Sciatic nerve (tissue), 2 donors: ENCODE measurements at regions of chr7 and their contacts with region 1.

Region 1: GRCh38 chr7:129169171-129169671 is 19.2 kb upstream of the SMO start:
- DNase-seq: peak; percentile 79
- ATAC-seq: peak; percentile 94

Region 2: GRCh38 chr7:129208667-129209066 is 39.4 kb after region 1 on chr7:
- intact Hi-C with region 1: loop called (anchors 2 kb)
- DNase-seq: no peak
- ATAC-seq: no peak